ENCODE measurements at regions of chr7 and their contacts with region 1.

Region 1: GRCh38 chr7:95534796-95535195 is 49.1 kb downstream of the ASB4 start:
- DNase-seq: no peak
- ATAC-seq: no peak
- H3K4me3 ChIP-seq: no peak overlapping the region
- H3K27ac ChIP-seq: no peak overlapping the region
- H3K4me1 ChIP-seq: no peaks in the 10 kb centered on the region
- H3K27me3 ChIP-seq: peaks cover 17% of the 10 kb centered on the region
- CTCF ChIP-seq: no peak
- POLR2A ChIP-seq: no peak
- RAD21 ChIP-seq: no peak

Region 2: DNA sequence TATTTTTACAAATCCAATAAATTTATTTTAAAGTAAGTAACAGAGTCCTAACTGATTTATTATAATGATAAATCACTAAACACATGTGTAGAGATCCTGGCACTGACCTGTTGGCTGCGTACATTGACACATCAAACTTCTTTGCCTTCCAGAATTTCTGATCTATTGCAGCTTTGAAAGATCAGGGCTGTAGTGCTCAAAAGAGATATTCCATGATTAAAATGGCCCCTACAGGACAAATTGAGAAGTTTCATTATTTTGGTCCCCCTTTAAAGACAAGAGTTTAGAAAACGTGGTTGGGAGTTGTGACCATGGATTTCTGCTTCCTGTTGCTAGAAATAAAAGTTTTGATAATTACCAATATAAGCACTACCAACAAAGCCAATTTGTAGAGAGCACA is 149.2 kb after region 1 on chr7:
- CTCF ChIA-PET with region 1: interaction called, 80 read pairs
- POLR2A ChIA-PET with region 1: no interaction called
- dilution Hi-C with region 1: no loop called
- in situ Hi-C with region 1: loop called (anchors 5 kb)
- intact Hi-C with region 1: no loop called
- DNase-seq: peak; percentile 30
- ATAC-seq: peak; percentile 74
- H3K4me3 ChIP-seq: no peak overlapping the region
- H3K27ac ChIP-seq: no peak overlapping the region
- H3K4me1 ChIP-seq: no peaks in the 10 kb centered on the region
- H3K27me3 ChIP-seq: peaks cover 2% of the 10 kb centered on the region; the same call in 1 of the 2 replicates
- CTCF ChIP-seq: peak; percentile 64
- POLR2A ChIP-seq: no peak
- RAD21 ChIP-seq: peak; percentile 57

Measured in IMR-90 (cell line).